ENCODE measurements at regions of chr3 and their contacts with region 1.

Region 1: DNA sequence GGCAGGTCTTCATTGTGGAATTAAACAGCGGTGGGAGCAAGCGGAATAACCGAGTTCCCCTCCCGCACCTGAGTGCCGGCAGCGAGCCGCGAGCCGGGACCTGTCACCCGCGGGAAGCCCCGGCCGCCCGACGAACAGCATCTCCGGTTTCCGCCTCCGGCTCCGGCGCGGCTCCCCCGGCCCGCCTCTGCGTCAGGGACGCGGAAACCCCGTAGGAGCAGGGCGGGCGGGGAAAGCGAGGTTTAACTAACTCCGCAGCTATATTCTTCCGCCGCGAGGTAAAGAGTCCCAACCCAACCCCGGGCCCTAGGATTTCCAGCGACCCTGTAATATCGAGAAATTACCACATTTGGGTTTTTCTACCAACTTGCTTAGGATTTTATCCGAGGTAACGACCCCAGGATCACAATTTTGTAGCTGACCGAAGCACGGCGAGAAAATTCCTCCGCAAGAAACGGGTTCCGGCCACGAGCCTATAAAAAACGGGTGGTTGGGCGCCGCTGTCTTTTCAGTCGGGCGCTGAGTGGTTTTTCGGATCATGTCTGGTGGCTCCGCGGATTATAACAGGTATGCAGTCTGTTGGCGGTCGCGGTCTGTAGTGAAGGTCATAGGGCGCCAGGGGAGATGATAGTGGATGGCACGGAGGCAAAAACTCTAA is at the start of gene EIF4A2:
- DNase-seq: peak; percentile 96
- H3K4me3 ChIP-seq: peak within 1 kb of the TSS; percentile 98 to 99
- H3K27ac ChIP-seq: peak within 1 kb of the TSS; percentile 94 to 99
- H3K4me1 ChIP-seq: peaks cover 22 to 28% of the 10 kb centered on the region in 2 experiments; a peak in 3 of 4 replicates
- H3K27me3 ChIP-seq: no peaks in the 10 kb centered on the region
- CTCF ChIP-seq: no peak
- EP300 ChIP-seq: peak in 1 of 2 experiments; percentile 65; a peak in 1 of 4 replicates
- RAD21 ChIP-seq: no peak
- polyA plus RNA-seq, gene EIF4A2: 270 and 410 TPM in 2 replicates

Region 2: GRCh38 chr3:186570096-186570940 is 212.9 kb before region 1 on chr3 and contains the start of gene DNAJB11:
- CTCF ChIA-PET with region 1: interaction called, 3 read pairs
- POLR2A ChIA-PET with region 1: interaction called, 17 read pairs
- DNase-seq: peak; percentile 96
- H3K4me3 ChIP-seq: peak within 1 kb of the TSS; percentile 86 to 96
- H3K27ac ChIP-seq: peak within 1 kb of the TSS; percentile 50 to 80; a peak in 3 of 4 replicates
- H3K4me1 ChIP-seq: peaks cover 16 to 17% of the 10 kb centered on the region in 2 experiments
- H3K27me3 ChIP-seq: no peaks in the 10 kb centered on the region
- CTCF ChIP-seq: no peak
- EP300 ChIP-seq: no peak; a peak in 1 of 4 replicates
- RAD21 ChIP-seq: no peak
- polyA plus RNA-seq, gene DNAJB11: 33.3 and 36.0 TPM in 2 replicates

Region 3: GRCh38 chr3:186742618-186743380 is 40.4 kb before region 1 on chr3:
- CTCF ChIA-PET with region 1: no interaction called
- POLR2A ChIA-PET with region 1: no interaction called
- DNase-seq: no peak
- H3K4me3 ChIP-seq: no peak overlapping the region
- H3K27ac ChIP-seq: no peak overlapping the region
- H3K4me1 ChIP-seq: no peaks in the 10 kb centered on the region
- H3K27me3 ChIP-seq: no peaks in the 10 kb centered on the region
- CTCF ChIP-seq: no peak
- EP300 ChIP-seq: no peak
- RAD21 ChIP-seq: no peak

Region 4: DNA sequence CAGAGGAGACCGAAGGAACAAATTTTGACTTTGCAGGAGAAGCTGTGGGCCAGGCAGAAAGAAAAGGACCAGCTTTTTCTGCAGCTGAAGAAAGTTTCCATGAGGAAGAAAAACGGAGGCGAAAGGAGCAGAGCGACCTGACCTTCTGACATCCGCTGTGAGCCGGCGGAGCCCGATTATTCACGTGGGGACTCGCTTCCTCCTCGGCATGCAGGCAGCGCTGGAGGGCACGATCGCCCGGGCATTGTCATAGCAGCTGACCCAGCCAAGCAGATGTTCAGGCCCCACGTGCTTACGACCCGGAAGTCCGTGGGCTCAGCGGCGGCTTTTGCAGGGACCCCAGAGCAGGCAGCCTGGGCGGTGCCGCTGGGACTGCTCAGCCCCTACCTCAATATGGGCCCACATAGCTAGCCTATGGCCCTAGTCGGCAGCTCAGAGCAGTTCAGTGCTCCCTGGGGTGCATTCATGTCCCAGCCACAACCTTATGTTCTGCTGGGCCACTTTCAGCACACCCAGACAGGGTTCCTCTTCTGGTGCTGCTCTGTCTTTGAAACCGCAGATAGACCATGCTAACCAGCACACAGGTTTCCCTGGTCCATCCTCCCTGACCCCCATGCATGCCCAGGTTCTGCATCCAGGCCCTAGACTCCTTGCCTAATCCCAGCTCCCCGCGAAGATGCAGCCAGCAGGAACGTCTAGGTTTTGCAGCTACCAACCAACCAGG is 10.3 kb before region 1 on chr3:
- CTCF ChIA-PET with region 1: no interaction called
- POLR2A ChIA-PET with region 1: interaction called, 19 read pairs
- DNase-seq: peak; percentile 25
- H3K4me3 ChIP-seq: no peak overlapping the region
- H3K27ac ChIP-seq: no peak overlapping the region
- H3K4me1 ChIP-seq: no peaks in the 10 kb centered on the region
- H3K27me3 ChIP-seq: peaks cover 6% of the 10 kb centered on the region; the same call in 1 of the 2 replicates
- CTCF ChIP-seq: no peak
- EP300 ChIP-seq: no peak
- RAD21 ChIP-seq: no peak

Region 5: DNA sequence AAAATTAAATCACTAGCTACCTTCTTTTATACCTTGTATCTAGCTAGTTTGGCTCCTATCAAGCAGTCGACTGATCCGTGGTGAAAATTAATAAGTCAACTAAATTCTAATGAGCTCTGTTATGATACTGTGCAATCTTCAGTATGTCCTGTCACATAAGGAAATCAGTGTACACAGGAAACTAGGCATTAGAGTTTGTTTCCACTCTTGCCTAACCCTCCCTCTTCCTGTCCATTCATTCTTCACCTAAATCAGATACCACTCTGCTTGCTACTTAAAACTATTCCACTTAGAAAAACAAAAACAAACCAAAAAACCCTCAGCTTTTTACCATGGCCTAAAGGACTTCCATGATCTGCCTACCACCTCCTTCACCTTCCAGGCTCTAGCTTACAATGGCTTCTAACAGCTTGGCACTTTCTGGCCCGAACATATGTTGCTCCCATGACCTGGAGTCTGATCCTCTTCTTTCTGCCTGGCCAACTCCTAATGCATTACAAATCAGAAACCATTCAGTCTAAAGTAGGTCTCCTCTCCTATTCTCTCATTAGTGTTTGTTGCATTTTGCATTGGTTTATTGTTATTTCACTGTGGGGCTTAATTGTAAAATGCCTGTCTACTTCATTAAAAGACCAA is 15.2 kb after region 1 on chr3:
- CTCF ChIA-PET with region 1: interaction called, 4 read pairs
- POLR2A ChIA-PET with region 1: interaction called, 11 read pairs
- DNase-seq: no peak
- H3K4me3 ChIP-seq: no peak overlapping the region
- H3K27ac ChIP-seq: no peak overlapping the region
- H3K4me1 ChIP-seq: no peaks in the 10 kb centered on the region
- H3K27me3 ChIP-seq: no peaks in the 10 kb centered on the region
- CTCF ChIP-seq: no peak
- EP300 ChIP-seq: no peak
- RAD21 ChIP-seq: no peak

Region 6: DNA sequence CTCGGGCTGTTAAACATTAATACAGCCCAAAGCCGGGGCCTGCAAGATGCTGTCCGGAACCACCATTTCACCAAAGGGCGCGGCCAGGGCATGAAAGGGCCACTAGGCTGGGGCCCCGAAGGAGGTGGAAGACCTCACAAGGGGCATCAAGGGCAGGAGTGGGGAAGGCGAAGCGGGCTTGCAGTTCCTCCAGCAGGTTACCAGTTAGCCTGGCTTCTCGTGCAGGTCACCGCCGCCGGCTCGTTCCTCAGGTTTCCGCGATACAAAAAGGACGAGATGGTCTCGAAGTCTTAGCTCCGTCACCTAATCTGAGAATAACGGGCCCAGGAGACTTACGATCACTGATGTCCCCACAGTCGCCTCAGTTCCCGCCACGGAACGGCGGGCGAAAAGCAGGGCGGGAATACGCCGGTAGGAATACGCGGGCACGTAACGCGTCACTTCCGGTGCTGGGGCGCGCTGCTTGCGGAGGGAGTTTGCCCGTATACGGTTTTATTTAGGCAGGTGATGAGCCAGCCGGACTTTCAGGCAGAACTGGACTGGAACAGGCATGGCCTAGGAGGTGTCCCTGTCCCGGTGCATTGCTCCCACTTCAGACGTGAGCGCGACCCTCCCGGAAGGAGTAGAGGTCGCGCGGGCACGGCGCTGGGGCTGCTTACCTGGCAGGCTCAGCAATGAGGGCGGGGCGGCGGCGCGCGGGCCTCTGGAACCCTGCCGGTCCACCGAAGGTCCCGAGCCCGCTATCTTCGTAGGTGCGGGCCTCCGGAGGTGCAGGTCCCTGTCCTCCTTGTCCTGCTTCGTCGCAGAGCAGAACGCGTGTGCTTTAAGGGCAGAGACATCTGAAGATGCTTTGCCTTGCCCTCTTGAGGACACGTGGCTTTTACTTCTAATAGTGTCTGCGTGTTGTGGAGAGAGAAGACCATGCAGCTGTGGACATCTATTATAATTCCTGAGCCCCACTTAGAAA is 23.2 kb after region 1 on chr3 and contains the start of gene RFC4:
- CTCF ChIA-PET with region 1: no interaction called
- POLR2A ChIA-PET with region 1: interaction called, 15 read pairs
- DNase-seq: peak; percentile 88
- H3K4me3 ChIP-seq: peak within 1 kb of the TSS; percentile 75 to 89
- H3K27ac ChIP-seq: peak within 1 kb of the TSS; percentile 15 to 86
- H3K4me1 ChIP-seq: peaks cover 8 to 12% of the 10 kb centered on the region in 2 experiments; a peak in 3 of 4 replicates
- H3K27me3 ChIP-seq: no peaks in the 10 kb centered on the region
- CTCF ChIP-seq: no peak
- EP300 ChIP-seq: no peak
- RAD21 ChIP-seq: no peak
- polyA plus RNA-seq, gene RFC4: 10.7 and 13.1 TPM in 2 replicates

Region 7: GRCh38 chr3:186826976-186827731 is 44.0 kb after region 1 on chr3:
- CTCF ChIA-PET with region 1: interaction called, 3 read pairs
- POLR2A ChIA-PET with region 1: interaction called, 14 read pairs
- DNase-seq: peak; percentile 99
- H3K4me3 ChIP-seq: peak overlapping the region; percentile 53 to 63; a peak in 3 of 4 replicates
- H3K27ac ChIP-seq: no peak overlapping the region
- H3K4me1 ChIP-seq: peaks cover 0 to 5% of the 10 kb centered on the region in 2 experiments; a peak in 1 of 4 replicates
- H3K27me3 ChIP-seq: peaks cover 43% of the 10 kb centered on the region
- CTCF ChIP-seq: no peak
- EP300 ChIP-seq: no peak
- RAD21 ChIP-seq: no peak

Region 8: DNA sequence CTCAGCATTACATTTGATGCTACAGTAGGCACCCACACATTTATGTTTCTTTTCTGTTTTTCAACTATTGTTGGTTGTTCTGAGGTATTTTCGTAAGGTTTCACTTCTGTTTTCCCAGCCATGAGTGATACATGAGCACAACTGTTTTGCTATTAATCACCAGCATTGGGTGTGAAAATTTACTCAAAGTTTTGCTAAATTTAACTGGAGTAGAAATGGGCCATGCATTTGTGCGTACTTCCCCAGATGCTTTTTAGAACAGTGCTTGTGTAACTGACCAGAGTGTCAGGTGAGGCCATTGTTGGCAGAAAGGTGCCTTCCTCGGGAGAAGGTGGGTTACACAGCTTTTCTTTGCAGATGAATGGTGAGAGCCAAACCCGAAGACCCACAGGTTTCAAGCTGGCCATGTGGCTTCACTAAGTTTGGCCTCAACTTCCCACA is 217.5 kb after region 1 on chr3:
- CTCF ChIA-PET with region 1: no interaction called
- POLR2A ChIA-PET with region 1: no interaction called
- DNase-seq: no peak
- H3K4me3 ChIP-seq: no peak overlapping the region
- H3K27ac ChIP-seq: no peak overlapping the region
- H3K4me1 ChIP-seq: no peaks in the 10 kb centered on the region
- H3K27me3 ChIP-seq: no peaks in the 10 kb centered on the region
- CTCF ChIP-seq: no peak
- EP300 ChIP-seq: no peak
- RAD21 ChIP-seq: no peak

Measured in SK-N-SH (cell line).